Lower lobe of right lung (tissue), 2 donors: ENCODE measurements at regions of chr3 and their contacts with region 1.

Region 1: GRCh38 chr3:8982509-8982908 is 19.2 kb upstream of the RAD18 start:
- DNase-seq: no peak
- ATAC-seq: no peak
- H3K4me3 ChIP-seq: no peak overlapping the region
- H3K27ac ChIP-seq: no peak overlapping the region
- H3K4me1 ChIP-seq: no peaks in the 10 kb centered on the region
- H3K27me3 ChIP-seq: peaks cover under 1% of the 10 kb centered on the region
- CTCF ChIP-seq: no peak

Region 2: GRCh38 chr3:8882171-8882593 is 100.3 kb before region 1 on chr3:
- intact Hi-C with region 1: no loop called
- DNase-seq: no peak
- ATAC-seq: no peak
- H3K4me3 ChIP-seq: no peak overlapping the region
- H3K27ac ChIP-seq: no peak overlapping the region
- H3K4me1 ChIP-seq: no peaks in the 10 kb centered on the region
- H3K27me3 ChIP-seq: no peaks in the 10 kb centered on the region
- CTCF ChIP-seq: no peak

Region 3: GRCh38 chr3:9302425-9303181 is 320.1 kb after region 1 on chr3:
- intact Hi-C with region 1: loop called (anchors 5 kb)
- DNase-seq: peak; percentile 82
- ATAC-seq: peak; percentile 94 to 97
- H3K4me3 ChIP-seq: peak overlapping the region; percentile 22
- H3K27ac ChIP-seq: no peak overlapping the region
- H3K4me1 ChIP-seq: peaks cover 9% of the 10 kb centered on the region
- H3K27me3 ChIP-seq: no peaks in the 10 kb centered on the region
- CTCF ChIP-seq: peak; percentile 85